Dendritic cell treated with granulocyte-macrophage colony-stimulating factor and Interleukin-4, amounts not matched to agents 40 ng/mL and 50 ng/mL, for 4 days (primary cell): ENCODE measurements at regions of chr9 and their contacts with region 1.

Region 1: DNA sequence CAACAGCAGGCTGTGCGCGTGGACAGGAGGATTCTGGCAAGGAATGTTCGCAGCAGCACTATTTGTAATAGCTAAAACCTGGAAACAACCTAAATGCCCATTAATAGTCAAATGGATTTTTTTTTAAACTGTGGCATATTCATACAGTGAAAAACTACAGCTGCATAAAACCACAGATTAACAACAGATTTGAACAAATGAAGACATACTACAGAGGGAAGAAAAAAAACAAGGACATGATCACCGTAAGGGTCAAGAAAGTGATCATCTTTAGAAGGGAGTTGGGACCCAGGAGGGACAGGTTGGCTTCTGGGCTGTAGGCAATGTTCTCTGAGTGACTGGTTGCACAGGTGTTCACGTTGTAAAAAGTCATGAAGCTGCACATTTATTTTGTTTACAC is 1.2 kb upstream of the TMOD1 start:
- H3K4me3 Mint-ChIP-seq: no peak overlapping the region
- H3K27ac Mint-ChIP-seq: no peak overlapping the region
- H3K4me1 Mint-ChIP-seq: peaks cover 13% of the 10 kb centered on the region
- H3K27me3 Mint-ChIP-seq: peaks cover 58% of the 10 kb centered on the region

Region 2: DNA sequence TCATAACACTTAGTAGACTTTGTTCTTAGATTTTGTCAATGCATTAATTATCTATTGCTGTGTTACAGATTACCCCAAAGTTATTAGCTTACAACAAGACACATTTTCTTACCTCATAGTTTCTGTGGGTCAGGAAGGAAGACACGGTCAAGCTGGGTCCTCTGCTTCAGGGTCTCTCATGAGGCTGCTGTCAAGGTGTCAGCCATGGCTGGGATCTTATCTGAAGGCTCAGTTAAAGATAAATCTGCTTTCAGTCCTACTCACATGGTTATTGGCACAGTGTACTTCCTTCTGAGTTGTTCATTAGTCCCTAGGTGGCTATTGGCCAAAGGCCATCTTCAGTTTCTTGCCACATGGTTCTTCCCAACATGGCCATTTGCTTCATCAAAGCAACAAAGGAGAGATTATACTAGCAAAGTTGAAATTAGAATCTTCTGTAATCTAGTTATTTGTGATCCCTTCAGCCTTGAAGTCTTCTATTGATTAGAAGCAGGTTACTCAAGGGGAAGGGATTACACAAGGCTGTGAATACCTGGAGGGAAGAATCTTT is 63.1 kb before region 1 on chr9:
- intact Hi-C with region 1: no loop called
- H3K4me3 Mint-ChIP-seq: no peak overlapping the region
- H3K27ac Mint-ChIP-seq: no peak overlapping the region
- H3K4me1 Mint-ChIP-seq: peaks cover 9% of the 10 kb centered on the region
- H3K27me3 Mint-ChIP-seq: no peaks in the 10 kb centered on the region

Region 3: GRCh38 chr9:97459099-97459725 is 41.1 kb before region 1 on chr9:
- intact Hi-C with region 1: no loop called
- H3K4me3 Mint-ChIP-seq: no peak overlapping the region
- H3K27ac Mint-ChIP-seq: no peak overlapping the region
- H3K4me1 Mint-ChIP-seq: no peaks in the 10 kb centered on the region
- H3K27me3 Mint-ChIP-seq: no peaks in the 10 kb centered on the region

Region 4: GRCh38 chr9:97487107-97487506 is 13.2 kb before region 1 on chr9:
- intact Hi-C with region 1: loop called (anchors 1 kb)
- H3K4me3 Mint-ChIP-seq: no peak overlapping the region
- H3K27ac Mint-ChIP-seq: no peak overlapping the region
- H3K4me1 Mint-ChIP-seq: peaks cover 10% of the 10 kb centered on the region
- H3K27me3 Mint-ChIP-seq: no peaks in the 10 kb centered on the region

Region 5: DNA sequence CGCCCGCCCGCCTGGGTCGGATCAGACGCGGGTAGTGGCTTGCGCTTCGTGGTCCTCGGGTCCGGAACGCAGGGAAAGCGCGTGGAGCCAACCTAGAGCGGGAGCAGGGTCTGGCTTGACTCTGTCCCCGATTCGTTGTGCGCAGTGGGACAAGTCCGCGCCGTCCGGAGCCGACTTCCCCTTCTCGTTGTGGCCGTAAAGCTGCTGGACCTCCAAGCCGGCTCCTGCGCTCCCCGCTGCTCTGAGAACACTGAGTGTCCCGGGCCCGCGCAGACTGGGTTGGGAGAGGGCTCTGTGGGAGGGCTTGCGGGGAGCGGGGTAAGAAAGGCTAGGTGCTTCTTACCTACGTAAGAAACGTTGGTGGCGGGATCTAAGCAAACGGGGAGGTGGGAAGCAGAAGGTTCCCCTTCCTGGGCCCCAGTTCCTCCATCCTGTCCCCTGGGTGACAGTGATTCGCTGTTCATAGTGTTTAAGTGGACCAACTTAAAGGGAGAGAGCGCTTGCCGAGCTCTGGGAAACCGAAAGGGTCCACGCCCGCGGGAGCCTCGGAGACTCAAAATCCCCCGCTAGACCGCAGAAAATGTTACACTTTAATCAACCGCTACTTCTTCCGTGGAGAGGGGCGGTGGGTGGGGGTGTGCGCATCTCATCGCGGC is 348.4 kb after region 1 on chr9:
- intact Hi-C with region 1: no loop called
- H3K4me3 Mint-ChIP-seq: peak overlapping the region; percentile 72
- H3K27ac Mint-ChIP-seq: no peak overlapping the region
- H3K4me1 Mint-ChIP-seq: peaks cover 20% of the 10 kb centered on the region
- H3K27me3 Mint-ChIP-seq: peaks cover 88% of the 10 kb centered on the region